ENCODE measurements at regions of chr1 and their contacts with region 1.

Region 1: GRCh38 chr1:155063550-155064110 is at the start of gene EFNA4:
- DNase-seq: peak; percentile 91
- CTCF ChIP-seq: no peak

Region 2: DNA sequence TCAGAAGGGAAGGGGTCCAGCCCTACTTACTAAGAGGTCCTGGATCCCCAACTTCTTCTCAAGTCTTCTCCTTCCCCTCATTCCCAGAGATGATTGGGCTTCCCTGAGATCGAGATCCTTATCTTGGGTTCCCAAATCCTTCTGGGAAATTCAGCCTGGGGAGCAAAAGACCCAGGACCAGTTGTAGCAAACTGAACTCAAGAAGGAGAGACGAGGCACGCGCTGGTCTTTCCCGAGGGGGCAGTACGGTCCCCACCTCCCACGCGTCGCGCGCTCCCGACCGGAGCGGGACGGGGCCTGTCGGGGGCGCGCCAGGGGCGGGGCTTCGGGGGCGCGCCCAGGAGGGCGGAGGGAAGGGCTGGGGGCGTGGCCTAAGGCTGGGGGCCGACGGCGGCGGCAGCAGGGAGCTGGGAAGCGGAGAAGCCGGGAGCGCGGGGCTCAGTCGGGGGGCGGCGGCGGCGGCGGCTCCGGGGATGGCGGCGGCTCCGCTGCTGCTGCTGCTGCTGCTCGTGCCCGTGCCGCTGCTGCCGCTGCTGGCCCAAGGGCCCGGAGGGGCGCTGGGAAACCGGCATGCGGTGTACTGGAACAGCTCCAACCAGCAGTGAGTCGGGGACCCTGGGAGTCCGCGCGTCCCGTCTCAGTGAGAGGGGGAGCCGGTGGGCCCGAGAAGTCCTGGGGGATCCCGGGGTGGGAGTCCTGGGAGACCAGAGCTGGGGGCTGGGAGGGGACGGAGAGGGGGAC is 15.0 kb after region 1 on chr1 and contains the start of gene EFNA3:
- CTCF ChIA-PET with region 1: interaction called, 169 read pairs
- POLR2A ChIA-PET with region 1: no interaction called
- DNase-seq: peak; percentile 90
- CTCF ChIP-seq: no peak